GM10248 (cell line): ENCODE measurements at regions of chr1 and their contacts with region 1.

Region 1: GRCh38 chr1:23613191-23614031 is 54.1 kb upstream of the ID3 start:
- DNase-seq: peak; percentile 59
- CTCF ChIP-seq: no peak

Region 2: DNA sequence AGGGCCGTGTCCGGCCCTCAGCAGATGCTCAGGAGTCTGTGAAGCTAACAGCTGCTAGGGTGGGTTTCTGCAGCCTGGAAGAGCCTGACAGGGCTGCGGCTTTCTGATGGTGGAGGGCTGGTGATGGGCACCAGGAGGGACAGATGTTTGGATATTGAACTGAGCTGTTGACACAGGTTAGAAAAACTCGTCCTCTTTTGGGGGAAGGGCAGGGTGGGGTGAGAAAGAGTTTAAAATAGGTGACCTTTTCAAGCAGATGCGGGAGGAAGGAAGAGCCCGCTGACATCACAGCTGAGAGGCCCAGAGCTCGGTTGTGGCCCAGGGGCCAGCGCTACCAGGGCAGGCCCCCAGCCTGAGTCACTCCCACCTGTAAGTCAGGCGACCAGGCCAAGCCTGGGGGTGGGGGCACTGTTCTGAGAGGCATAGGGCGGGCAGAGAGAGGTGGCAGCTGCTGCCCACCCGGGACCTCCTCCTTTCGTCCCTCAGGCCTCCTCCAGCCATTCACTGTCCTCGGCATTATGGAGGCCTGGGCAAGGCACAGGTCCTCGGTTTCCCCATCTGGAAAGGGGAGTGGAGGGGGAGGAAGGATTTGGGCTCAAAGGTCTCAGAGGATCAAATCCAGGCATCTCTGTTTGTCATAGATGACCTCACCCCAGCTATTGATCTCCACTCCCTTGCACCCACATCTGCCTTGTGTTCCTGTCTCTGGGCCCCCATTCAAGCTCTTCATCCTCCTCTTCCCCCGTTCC is 21.8 kb before region 1 on chr1:
- CTCF ChIA-PET with region 1: interaction called, 18 read pairs
- POLR2A ChIA-PET with region 1: no interaction called
- DNase-seq: peak; percentile 79
- CTCF ChIP-seq: no peak

Region 3: DNA sequence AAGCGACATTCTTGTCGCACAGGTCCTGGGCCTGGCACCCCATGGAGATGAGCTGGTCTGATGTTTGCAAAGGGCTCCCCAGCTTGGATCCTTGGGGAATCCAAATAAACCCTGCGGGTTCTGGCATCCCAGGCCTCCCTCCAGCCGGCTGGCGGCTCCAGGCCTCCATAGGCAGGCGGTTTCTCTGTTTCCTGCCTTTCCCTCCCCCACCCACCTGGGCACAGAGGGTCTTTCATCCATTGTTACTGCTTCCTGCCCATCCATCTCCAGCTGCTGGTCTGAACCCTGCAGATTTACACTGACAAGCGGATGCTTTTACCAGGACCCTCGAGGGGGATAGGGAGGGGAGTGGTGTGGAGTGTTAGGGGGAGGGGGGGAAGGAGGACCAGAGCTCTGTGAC is 15.0 kb before region 1 on chr1:
- CTCF ChIA-PET with region 1: interaction called, 18 read pairs
- POLR2A ChIA-PET with region 1: no interaction called
- DNase-seq: no peak
- CTCF ChIP-seq: no peak